Dorsolateral prefrontal cortex (tissue), 120 donors: ENCODE measurements at regions of chr3 and their contacts with region 1.

Region 1: DNA sequence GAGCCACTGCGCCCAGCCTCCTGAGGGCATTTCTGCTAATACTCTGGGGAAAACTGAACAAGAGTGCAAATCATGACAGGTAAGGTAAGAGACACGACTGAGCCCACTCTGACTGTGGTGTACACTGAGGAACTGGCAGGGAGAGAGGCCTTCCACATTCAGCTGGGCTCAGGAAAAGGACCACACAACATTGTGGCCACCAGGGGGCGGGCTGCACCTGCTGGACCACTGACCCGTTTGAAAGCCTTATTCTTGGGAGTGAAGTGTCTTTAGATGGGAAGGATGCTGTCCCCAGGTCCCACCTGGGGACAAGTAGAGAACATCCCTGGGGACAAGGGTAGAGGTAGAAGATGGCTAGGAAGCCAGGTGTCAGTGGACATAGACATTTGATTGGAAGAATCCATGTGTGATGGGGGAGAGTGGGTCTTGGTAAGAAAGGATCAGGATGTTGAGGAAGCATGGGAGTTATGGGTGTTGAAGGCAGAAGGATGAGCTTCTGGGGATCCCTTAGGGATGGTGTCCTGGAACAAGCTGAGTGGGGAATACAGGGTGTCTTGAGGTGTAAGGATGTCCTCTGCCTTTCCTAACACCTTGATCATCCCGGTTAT is 6.2 kb upstream of the CTDSPL start:
- DNase-seq: peak; percentile 82 to 95 (median 90)
- H3K4me3 ChIP-seq: no peak overlapping the region
- H3K27ac ChIP-seq: peak overlapping the region in 7 of 59 donors; percentile 9 to 67 (median 34)
- H3K27me3 ChIP-seq: no peaks in the 10 kb centered on the region
- CTCF ChIP-seq: peak; percentile 92 to 99 (median 96)

Region 2: DNA sequence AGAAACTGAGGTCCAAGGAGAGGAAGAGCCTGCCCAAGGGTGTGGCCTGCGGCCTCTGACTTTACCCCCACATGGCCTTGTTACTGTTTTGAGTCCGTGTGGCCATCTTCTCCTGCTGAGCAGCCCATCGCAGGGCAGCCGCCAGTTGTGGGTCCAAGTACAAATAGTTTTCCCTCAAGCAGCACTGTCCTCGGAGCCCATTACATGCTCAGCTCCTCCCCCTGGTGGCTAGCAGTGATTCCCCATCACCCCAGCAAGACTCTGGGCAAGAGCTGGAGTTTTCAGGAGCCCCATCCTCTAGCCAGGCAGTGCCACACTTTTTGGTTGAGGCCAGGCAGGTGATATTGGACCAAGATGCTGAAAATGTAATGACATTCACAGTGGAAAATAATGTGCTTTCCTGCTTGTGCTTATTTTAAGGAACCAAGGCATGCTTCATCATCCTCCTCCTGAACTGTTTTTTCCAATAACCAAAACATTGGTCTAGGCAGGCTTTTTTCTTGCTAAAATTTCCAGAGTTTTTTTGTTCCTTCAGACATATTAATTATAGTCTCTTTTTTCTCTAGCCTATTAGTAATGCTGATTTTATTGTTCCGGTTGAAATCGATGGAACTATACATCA is 111.9 kb after region 1 on chr3:
- intact Hi-C with region 1: loop called (anchors 1 to 2 kb)
- DNase-seq: peak in 7 of 10 donors; percentile 51 to 72 (median 68)
- H3K4me3 ChIP-seq: no peak overlapping the region
- H3K27ac ChIP-seq: peak overlapping the region in 37 of 59 donors; percentile 6 to 92 (median 74)
- H3K27me3 ChIP-seq: no peaks in the 10 kb centered on the region
- CTCF ChIP-seq: peak; percentile 36 to 92 (median 78)

Region 3: DNA sequence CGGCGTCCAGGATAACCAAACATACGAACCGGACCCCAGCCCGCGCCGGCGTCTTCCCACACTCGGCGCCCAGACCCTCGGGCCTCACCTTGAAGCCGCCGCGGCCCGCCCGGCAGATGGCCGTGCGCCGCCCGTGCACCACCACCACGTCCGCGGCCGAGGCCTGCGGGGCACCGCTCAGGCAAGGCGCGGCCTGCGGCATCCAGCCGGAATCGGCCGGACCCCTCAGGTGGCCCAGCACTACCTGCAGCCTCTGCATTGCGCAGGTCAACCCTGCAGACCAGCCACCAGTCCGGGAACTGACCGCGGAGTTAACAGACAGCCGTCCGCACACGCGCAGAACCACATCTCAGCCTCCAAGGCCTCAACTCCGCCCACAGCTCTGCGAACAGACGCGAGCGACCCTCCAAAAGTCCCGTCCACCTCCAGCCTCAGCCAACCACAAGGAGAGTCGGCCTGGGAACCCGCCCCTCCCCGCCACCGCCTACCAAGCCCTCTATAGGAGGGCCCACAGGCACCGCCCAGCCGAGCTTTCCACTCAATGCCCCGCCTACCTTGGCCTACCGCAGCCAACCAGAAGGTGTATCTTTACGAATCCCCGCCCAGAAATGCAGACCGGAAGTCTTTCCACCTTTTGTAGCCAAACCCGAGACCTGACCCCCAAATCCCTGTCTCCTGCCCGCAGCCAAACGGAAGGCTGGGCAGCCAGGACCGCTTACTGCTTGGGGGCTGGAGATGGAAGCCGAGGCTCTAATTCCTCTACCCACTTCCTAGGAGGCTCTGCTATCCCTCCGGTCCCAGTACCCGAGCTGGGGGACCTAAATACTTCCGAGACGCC is 281.5 kb after region 1 on chr3 and contains the start of gene ACAA1:
- intact Hi-C with region 1: loop called in 1 of 2 experiments (anchors 10 kb)
- DNase-seq: peak; percentile 96 to 100 (median 100)
- H3K4me3 ChIP-seq: peak within 1 kb of the TSS; percentile 47 to 100 (median 93)
- H3K27ac ChIP-seq: peak within 1 kb of the TSS in 58 of 59 donors; percentile 10 to 96 (median 89)
- H3K27me3 ChIP-seq: no peaks in the 10 kb centered on the region
- CTCF ChIP-seq: peak in 42 of 56 donors; percentile 5 to 64 (median 24)
- total RNA-seq, gene ACAA1: 60.8 to 105 (median 80.7) TPM

Region 4: DNA sequence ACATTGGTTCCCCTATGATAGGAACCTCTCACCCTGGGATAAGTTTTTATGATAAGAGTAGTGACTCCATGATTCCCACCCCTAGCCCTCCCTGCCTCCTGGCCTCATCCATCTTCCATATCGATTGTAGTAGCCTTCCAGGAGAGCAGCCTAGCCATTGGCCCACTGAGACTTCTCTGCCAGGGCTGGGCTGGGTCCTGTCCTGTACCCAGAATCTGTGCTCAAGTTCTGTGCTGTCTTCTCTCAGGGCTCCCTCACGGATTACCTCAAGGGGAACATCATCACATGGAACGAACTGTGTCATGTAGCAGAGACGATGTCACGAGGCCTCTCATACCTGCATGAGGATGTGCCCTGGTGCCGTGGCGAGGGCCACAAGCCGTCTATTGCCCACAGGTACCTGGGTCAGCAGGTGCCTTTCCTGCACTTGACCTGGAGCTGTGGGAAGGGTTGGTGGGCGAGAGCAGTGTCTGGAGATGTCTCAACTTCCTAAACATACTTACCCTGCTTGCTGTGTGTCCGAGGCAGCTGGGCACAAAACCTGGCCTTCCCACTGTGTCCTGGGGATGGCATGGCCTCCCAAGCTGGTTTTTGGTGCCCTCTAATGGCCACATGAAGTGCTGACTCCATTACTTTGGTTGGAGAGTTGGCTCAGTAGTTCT is 624.1 kb after region 1 on chr3:
- intact Hi-C with region 1: loop called in 1 of 2 experiments (anchors 10 kb)
- DNase-seq: peak in 8 of 10 donors; percentile 52 to 80 (median 72)
- H3K4me3 ChIP-seq: no peak overlapping the region
- H3K27ac ChIP-seq: no peak overlapping the region
- H3K27me3 ChIP-seq: no peaks in the 10 kb centered on the region
- CTCF ChIP-seq: peak; percentile 42 to 95 (median 84)